Lower leg skin (tissue), 4 donors: ENCODE measurements at regions of chr6 and their contacts with region 1.

Region 1: DNA sequence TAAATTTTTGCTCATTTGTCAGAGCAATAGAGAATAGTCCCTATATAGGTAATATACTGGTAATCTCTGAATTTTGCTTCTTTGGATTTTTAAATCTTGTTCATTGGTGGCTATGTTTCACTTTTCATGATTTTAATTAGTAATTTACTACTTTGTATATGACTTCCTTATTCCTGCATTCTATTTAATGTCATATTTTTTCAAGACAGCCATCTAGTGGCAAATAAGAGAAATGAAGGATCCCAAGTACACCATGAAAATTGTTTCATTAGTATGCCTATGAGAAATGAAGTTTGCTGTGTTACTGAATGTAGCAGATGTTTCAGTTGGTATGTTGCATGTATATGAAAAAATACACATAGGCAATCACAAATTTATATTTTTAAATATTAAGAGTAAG is 82.4 kb downstream of the ZNF292 start:
- DNase-seq: no peak
- H3K4me3 ChIP-seq: no peak overlapping the region
- CTCF ChIP-seq: no peak
- POLR2A ChIP-seq: no peak

Region 2: DNA sequence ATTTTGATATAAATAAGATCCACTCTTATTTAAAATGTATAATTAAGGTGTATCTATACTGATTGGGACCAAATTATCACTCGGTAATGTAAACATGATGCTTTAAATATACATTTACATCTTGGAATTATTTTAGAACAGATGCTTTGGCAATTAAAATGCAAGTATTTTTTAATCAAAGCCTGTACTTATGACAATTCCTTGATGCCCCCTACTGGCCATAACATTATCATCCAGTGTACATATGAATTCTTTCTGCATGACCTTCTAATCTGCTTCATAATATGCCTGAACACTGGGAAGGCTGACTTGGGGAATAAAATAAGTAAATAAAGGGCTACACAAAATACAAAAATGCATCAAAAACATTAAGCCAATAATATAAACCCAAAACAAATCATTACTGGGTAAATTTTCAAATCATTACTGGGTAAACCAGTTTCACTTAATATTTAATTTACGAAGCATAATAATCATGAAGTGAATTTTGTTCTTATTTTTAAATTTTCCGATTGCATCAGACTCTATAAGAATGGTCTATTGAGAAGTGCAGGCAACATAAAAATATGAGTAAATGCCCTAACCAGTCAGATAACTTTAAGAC is 208.0 kb before region 1 on chr6:
- intact Hi-C with region 1: no loop called
- DNase-seq: no peak
- H3K4me3 ChIP-seq: no peak overlapping the region
- CTCF ChIP-seq: no peak
- POLR2A ChIP-seq: no peak

Region 3: GRCh38 chr6:87139236-87139635 is 98.6 kb before region 1 on chr6:
- intact Hi-C with region 1: loop called (anchors 10 kb)
- DNase-seq: no peak
- H3K4me3 ChIP-seq: no peak overlapping the region
- CTCF ChIP-seq: peak in 1 of 3 donors; percentile 38
- POLR2A ChIP-seq: no peak